ENCODE measurements at regions of chr1 and their contacts with region 1.

Region 1: DNA sequence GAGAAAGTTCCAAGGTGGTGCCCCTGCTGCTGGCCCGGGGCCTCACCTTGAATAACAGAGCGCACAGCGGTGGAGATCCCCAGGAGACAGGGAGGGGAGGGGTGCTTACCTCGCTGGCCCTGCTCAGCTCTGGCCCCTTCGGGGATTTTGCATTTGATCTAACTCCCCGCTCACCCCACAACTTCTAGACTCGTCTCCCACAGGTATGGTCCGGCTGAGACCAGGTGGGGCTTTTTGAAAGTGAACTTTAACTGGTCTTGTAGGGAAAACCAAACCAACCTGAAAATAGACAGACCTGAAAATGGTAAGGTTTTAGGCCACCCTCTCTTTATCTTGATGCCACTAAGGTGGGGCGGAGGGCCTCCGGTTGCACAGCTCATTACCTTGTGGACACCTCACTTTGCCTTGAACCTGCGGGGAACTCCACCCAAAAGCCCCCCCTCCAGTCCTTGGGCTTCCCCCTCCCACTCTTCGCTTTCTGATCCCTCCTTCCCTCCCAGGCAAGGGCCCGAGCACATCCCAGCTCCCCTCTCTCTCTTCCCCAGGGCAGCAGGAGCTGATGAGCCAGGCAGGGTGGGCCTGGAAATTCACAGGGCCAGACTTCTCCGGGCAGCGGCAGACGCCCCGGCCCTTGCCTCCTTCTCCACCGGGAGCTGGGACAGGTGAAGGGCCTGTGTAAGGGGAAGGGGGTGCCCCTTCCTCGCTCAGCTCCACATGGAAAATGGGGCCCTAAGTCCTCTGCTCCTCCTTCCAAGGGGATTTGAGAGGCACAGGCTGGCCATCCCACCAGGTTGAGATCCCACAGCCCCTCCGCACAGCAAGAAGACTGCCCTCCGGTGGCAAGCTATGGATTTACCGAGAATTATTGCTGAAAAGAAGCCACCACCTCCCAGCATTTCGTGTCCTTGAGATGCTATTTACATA is 16.1 kb downstream of the TNFRSF8 start:
- DNase-seq: peak; percentile 57
- H3K4me3 Mint-ChIP-seq: no peak overlapping the region
- H3K27ac Mint-ChIP-seq: no peak overlapping the region
- H3K4me1 Mint-ChIP-seq: peaks cover 22% of the 10 kb centered on the region
- H3K27me3 Mint-ChIP-seq: peaks cover 27% of the 10 kb centered on the region

Region 2: DNA sequence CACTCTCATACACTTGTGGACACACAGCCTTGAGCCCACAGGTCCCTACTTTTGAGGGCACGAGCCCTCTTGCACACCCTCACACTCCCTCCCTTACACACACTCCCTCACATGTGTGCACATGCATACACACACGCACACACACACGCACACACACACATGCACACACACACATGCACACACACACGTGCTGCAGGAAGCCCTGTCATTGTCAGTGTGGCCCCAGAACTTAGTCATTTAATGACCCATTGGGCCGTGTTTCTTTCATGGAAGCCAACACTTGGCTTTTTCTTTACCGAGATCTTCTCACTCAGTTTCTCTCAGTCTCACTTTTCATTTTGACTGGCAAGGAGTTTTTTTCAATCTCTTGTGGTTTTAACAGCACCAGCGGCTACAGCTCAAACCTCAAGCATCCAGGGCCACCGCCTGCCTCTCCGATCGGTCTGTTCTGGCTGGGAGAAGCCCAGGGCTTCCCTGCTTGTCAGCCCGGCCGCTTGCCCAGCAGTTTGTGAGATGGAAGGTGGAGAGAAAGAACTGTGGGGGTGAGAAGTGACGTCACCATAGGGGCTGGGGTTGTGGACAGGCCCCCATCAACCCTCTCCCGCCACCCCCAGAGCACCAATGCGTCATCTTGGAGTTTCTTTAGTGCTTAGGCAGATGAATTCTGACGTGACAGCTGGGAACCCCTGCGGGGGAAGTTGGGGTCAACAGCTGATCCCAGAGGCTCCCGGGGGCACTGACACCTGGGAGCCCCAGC is 31.9 kb before region 1 on chr1:
- CTCF ChIA-PET with region 1: interaction called, 12 read pairs
- DNase-seq: peak; percentile 75
- H3K4me3 Mint-ChIP-seq: no peak overlapping the region
- H3K27ac Mint-ChIP-seq: no peak overlapping the region
- H3K4me1 Mint-ChIP-seq: peaks cover 9% of the 10 kb centered on the region
- H3K27me3 Mint-ChIP-seq: peaks cover 32% of the 10 kb centered on the region

Region 3: DNA sequence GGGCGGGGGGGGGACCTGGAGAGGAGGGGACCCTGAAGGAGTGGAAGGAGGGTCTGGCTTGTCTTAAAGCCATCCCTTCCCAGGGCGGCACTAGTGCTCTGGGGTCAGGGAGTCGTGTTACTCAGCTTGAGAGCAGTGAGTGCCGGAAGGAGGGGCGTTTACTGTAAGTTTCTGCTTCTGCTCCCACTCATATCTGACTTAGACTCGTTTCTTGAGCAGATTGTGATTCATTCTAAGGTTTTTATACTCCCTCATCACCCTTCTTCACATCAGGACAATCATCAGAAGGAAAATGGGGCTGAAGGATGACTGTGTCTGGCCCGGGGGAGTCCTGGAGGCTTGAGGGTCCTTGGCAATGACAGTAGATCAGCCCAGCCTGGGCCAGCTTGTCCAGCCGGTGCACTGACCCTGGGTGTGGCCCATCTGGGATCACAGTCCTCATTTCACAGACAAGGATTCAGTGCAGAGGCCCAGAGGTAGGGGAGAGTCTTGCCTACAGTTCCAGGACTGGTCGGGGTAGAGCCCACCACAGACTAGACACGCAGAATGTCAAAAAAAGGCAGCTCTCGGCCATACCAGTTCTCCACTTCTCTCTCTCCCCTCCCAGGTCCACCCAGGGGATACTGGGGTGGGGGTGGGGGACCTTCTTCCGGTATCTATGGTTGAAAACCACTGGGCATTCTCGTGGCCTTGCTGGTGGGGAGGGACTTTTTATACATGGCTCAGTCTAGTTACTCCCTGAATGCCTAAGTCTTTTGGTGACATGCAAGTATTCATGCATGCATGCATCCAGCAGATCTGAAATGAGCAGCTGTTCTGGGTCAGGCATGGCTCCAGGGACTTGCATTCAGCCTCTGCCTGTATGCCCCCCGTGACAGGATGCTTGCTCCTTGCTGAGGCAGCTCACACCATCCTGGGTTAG is 11.0 kb before region 1 on chr1:
- CTCF ChIA-PET with region 1: interaction called, 19 read pairs
- DNase-seq: peak; percentile 47
- H3K4me3 Mint-ChIP-seq: no peak overlapping the region
- H3K27ac Mint-ChIP-seq: peak overlapping the region; percentile 68
- H3K4me1 Mint-ChIP-seq: peaks cover 57% of the 10 kb centered on the region
- H3K27me3 Mint-ChIP-seq: peaks cover 50% of the 10 kb centered on the region